HEK293 (cell line): ENCODE measurements at regions of chr5 and their contacts with region 1.

Region 1: GRCh38 chr5:178120868-178121357 is 7.6 kb downstream of the N4BP3 start:
- H3K4me3 ChIP-seq: no peak overlapping the region
- H3K27ac ChIP-seq: no peak overlapping the region; the same call in 1 of the 2 replicates
- H3K4me1 ChIP-seq: 0 out of 2 replicates have a peak, but pooled peaks cover 2% of the 10 kb centered on the region
- CTCF ChIP-seq: peak; percentile 96

Region 2: DNA sequence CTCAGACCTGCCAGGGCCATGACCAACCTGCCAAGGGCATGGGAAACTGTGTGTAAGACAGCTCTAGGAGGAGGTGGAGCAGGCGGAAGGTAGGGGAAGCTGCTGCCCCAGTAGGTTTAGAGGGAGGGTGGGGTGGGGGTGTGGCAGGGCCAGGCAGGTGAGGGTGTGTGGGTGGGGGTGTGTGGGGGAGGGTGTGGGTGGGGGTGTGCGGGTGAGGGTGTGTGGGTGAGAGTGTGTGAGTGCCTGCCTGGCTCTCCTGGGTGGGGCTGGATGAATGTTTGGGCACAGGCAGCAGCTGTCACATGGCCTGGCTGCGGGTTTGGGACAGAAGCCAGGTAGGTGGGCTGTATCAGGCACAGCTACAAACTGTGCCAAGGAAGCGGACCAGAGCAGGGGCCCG is 16.4 kb before region 1 on chr5:
- CTCF ChIA-PET with region 1: interaction called, 12 read pairs
- POLR2A ChIA-PET with region 1: interaction called, 3 read pairs
- H3K4me3 ChIP-seq: no peak overlapping the region
- H3K27ac ChIP-seq: no peak overlapping the region
- H3K4me1 ChIP-seq: no peaks in the 10 kb centered on the region
- CTCF ChIP-seq: no peak

Region 3: DNA sequence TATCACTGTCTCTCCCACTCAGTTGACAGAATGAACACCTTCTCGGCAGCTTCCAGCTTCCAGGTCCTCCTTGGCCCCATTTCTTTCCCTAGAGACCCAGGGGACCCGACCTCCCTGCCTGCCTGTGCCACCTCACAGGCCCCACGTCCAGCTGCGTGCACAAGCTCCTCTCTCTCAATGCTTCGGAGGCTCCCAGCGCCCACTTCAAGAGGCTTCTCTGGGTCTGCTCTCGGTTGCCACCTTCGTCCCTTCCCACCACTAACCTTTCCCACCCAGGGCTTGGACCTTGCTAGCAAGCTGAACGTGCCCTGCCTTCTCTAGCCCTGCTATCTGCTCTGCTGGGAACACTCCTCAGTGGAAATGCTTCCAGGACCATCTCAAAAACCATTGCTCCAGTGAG is 10.4 kb before region 1 on chr5:
- CTCF ChIA-PET with region 1: interaction called, 16 read pairs
- POLR2A ChIA-PET with region 1: interaction called, 3 read pairs
- H3K4me3 ChIP-seq: no peak overlapping the region
- H3K27ac ChIP-seq: no peak overlapping the region
- H3K4me1 ChIP-seq: no peaks in the 10 kb centered on the region
- CTCF ChIP-seq: no peak

Region 4: GRCh38 chr5:178137991-178138390 is 17.1 kb after region 1 on chr5:
- CTCF ChIA-PET with region 1: interaction called, 13 read pairs
- POLR2A ChIA-PET with region 1: interaction called, 6 read pairs
- H3K4me3 ChIP-seq: no peak overlapping the region
- H3K27ac ChIP-seq: no peak overlapping the region
- H3K4me1 ChIP-seq: no peaks in the 10 kb centered on the region
- CTCF ChIP-seq: no peak

Region 5: DNA sequence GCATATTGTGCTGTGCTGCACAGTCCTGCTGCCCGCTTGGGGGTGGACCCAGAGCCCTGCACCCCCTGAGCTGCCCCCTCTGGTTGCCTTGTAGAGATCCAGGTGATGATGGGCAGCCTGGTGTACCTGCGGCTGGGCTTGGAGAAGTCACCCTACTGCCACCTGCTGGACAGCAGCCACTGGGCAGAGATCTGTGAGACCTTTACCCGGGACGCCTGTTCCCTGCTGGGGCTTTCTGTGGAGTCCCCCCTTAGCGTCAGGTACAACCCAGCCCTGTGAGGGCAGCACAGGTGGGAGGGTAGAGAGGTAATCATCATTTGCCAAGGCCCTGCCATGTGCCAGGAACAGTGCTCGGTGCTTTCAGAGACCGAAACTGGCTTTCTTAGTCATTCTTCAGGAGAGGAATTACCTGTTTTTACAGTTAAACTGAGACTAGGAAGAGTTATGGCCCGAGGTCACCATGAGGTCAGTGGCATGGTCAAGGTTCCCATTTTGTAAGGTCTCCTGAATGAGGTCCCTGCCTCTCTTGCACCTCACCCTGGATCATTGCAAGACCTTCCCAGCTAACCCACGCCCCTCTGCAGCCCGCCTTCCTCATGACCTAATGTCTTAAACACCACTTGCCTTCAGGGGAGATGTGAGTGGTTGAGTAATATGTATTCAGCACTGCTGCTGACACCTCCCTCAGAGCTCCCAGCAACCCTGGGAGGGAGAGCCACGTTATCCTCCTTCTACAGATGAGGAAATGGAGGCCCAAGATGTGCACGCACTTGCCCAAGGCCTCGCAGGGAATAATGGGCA is 25.3 kb after region 1 on chr5:
- CTCF ChIA-PET with region 1: interaction called, 12 read pairs
- POLR2A ChIA-PET with region 1: no interaction called
- H3K4me3 ChIP-seq: no peak overlapping the region
- H3K27ac ChIP-seq: no peak overlapping the region
- H3K4me1 ChIP-seq: no peaks in the 10 kb centered on the region
- CTCF ChIP-seq: peak; percentile 69

Region 6: DNA sequence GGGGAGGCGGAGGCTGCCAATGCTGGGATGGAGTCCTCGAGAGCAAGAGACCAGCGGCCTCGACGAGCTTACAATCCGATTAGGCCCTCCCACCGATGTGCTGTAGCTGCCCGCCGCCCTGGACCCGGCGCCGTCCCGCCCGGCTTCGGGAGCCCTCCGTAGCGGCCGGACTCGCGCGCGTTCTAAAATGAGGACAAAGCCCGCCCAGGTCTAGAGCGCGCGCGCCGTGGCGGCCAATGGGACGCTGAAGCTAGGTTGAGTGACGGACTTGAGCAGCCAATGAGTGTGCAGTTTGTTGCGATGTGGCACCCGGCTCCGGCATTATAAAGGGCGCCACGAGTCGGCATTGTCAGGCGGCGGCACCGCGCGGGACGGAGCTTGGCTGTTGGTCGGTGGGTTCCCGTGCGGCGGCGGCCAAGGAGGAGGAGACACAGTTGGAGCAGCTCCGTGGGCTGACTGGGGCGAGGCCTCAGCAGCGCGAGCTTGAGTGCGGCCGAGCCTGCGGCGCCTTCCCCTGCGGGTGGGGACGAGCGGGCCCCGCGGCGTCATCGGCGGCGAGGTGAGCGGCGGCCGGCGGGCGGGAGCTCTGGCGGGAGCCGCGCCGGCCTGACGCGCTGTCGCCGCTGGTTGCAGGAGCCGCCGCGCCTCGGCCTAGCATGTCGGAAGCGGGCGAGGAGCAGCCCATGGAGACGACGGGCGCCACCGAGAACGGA is 83.4 kb after region 1 on chr5 and contains the start of gene HNRNPAB:
- CTCF ChIA-PET with region 1: no interaction called
- POLR2A ChIA-PET with region 1: interaction called, 13 read pairs
- H3K4me3 ChIP-seq: peak within 1 kb of the TSS; percentile 68
- H3K27ac ChIP-seq: peak within 1 kb of the TSS; percentile 98
- H3K4me1 ChIP-seq: peaks cover 6% of the 10 kb centered on the region; the same call in 1 of the 2 replicates
- CTCF ChIP-seq: no peak